ENCODE measurements at regions of chr12 and their contacts with region 1.

Region 1: DNA sequence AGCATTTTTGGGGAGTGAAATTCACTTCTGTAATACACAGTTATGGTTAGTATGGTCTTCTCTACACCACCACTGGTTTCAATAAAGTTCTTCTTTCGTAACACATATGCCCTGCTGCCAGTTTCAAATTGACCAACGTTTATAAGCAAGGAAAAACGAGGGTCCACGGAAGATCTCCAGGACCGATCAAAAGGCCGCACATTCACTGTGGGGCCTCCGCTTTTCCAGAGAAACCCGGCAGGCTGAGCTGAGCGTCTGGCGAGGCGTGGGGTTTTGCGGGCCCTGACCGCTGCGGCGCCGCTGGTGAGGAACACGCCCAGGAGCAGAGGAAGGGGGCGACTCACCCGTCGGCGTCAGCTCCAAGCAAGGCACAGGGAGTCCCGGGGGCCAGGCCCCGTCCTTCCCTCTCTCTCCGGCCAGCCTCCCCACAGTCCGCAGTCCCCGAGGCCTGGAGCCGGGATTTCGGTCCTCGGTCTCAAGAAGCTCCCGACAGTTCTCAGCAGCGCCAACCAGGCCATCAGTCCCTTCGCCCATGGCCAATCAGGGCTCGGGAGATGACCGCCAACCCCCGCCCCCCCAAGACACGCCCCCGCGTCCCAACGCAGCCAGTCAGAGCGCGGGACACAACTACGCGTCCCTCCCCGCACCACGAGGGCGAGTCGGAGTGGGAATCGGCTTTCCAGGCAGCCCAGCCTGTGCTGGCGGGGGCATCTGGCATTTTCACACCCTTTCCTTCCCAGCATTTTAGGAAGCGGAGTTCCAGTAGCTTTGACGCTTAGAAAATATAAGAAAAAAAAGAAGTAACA is at the start of gene MTERF2:
- DNase-seq: peak; percentile 96
- H3K4me3 Mint-ChIP-seq: peak within 1 kb of the TSS; percentile 97
- H3K27ac Mint-ChIP-seq: peak within 1 kb of the TSS; percentile 92
- H3K4me1 Mint-ChIP-seq: peaks cover 25% of the 10 kb centered on the region
- H3K27me3 Mint-ChIP-seq: no peaks in the 10 kb centered on the region
- CTCF ChIP-seq: no peak
- total RNA-seq, gene MTERF2: 7.6 and 9.3 TPM in 2 replicates

Region 2: DNA sequence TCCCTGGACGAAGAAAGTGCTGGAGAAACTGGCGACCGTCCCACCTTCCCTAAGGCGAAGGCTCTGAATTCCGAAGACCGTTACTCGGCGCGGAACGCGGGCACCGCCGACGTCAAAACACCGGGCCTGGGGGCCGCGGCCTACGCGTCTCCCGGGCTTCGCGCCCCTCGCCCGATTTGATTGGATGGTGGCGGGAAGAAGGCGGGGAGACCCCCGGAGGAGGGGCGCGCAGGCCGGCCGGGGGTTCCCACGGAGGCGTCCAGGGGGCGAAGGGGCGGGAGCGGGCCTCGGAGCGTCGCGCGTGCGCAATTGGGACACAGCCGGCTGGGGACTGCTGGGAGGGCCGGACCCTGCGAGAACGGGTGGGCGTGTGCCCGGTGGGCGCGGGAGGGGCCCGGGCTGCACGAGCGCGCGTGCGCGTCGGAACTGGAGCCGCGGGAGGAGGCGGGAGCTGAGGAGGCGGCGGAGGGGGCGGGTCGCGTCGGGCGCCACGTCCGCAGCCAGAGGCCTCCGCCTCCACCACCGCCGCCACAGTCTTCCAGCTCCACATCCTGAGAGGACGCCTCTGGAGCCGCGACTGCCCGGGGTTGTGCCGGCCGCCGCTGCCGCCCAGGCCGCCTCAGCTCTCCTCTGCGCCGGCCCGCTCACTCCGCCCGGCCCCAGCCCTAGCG is 31.3 kb before region 1 on chr12 and contains the start of gene TMEM263:
- CTCF ChIA-PET with region 1: no interaction called
- POLR2A ChIA-PET with region 1: interaction called, 24 read pairs
- intact Hi-C with region 1: no loop called
- DNase-seq: peak; percentile 86
- H3K4me3 Mint-ChIP-seq: peak within 1 kb of the TSS; percentile 95
- H3K27ac Mint-ChIP-seq: peak within 1 kb of the TSS; percentile 95
- H3K4me1 Mint-ChIP-seq: peaks cover 9% of the 10 kb centered on the region
- H3K27me3 Mint-ChIP-seq: no peaks in the 10 kb centered on the region
- CTCF ChIP-seq: no peak
- total RNA-seq, gene TMEM263: 60.1 and 68.4 TPM in 2 replicates

Region 3: GRCh38 chr12:106971065-106971464 is 15.8 kb before region 1 on chr12:
- CTCF ChIA-PET with region 1: interaction called, 3 read pairs
- POLR2A ChIA-PET with region 1: interaction called, 13 read pairs
- intact Hi-C with region 1: no loop called
- DNase-seq: no peak
- H3K4me3 Mint-ChIP-seq: no peak overlapping the region
- H3K27ac Mint-ChIP-seq: no peak overlapping the region
- H3K4me1 Mint-ChIP-seq: peaks cover 8% of the 10 kb centered on the region
- H3K27me3 Mint-ChIP-seq: no peaks in the 10 kb centered on the region
- CTCF ChIP-seq: no peak

Region 4: DNA sequence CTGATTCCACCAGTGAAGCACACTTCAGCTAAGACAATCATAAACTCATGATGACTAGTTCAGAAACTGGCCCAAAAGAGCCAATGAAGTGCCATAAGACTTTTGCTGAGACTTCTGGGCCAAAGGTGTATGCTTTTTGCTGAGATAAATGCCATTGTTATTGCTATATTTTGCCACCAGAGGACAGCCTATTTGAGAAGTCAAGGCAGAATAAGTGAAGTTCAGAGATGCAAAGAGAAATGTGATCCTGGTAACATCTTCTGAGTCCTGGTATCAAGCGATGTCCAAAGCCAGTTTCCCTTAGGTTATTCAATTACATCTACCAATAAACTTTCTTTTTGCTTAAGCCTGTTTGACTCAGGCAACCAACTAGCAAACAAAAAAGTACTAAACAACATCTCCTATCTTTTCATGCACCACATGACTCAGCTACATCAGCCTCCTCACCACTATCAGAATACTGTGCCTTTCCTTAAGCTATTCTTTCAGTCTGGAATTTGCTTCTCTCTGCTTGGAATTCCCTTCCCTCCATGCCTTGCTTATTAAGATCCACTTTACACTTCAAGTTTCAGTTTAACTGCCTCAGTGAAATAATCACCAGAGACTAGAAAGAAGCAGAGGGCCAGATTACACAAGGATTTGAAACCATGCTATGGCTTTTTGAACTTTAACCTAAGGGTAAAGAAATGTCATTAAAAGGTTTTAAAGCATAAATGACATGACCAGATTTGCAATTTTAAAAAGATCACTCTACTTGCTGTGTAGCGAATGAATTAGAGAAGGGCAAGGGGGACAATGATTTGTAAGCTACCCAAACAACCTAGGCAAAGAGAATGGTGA is 92.6 kb after region 1 on chr12:
- CTCF ChIA-PET with region 1: no interaction called
- POLR2A ChIA-PET with region 1: no interaction called
- intact Hi-C with region 1: loop called (anchors 2 kb)
- DNase-seq: peak; percentile 35
- H3K4me3 Mint-ChIP-seq: no peak overlapping the region
- H3K27ac Mint-ChIP-seq: no peak overlapping the region
- H3K4me1 Mint-ChIP-seq: no peaks in the 10 kb centered on the region
- H3K27me3 Mint-ChIP-seq: no peaks in the 10 kb centered on the region
- CTCF ChIP-seq: peak; percentile 60